AG04450 (cell line): ENCODE measurements at regions of chr10 and their contacts with region 1.

Region 1: GRCh38 chr10:61047081-61047480 is 103.1 kb upstream of the RHOBTB1 start:
- DNase-seq: no peak
- H3K4me3 ChIP-seq: no peak overlapping the region
- H3K27ac ChIP-seq: no peak overlapping the region
- H3K27me3 ChIP-seq: peaks cover 2% of the 10 kb centered on the region
- CTCF ChIP-seq: no peak

Region 2: DNA sequence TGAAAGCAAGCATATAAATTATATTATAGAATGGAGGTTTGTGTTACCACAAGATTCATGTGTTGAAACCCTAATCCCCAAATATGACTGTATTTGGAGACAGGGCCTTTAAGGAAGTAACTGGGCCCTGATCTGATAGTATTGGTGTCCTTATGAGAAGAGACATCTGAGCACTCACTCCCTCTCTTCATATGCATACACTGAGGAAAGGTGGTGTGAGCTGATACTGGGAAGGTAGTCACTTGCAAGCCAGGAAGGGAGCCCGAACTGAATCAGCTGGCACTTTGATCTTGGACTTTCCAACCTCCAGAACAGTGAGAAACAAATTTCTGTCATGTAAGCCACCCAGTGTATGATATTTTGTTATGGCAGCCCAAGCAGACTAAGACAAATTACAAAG is 36.2 kb before region 1 on chr10:
- CTCF ChIA-PET with region 1: no interaction called
- POLR2A ChIA-PET with region 1: no interaction called
- DNase-seq: no peak
- H3K4me3 ChIP-seq: no peak overlapping the region
- H3K27ac ChIP-seq: no peak overlapping the region
- H3K27me3 ChIP-seq: peaks cover 7% of the 10 kb centered on the region
- CTCF ChIP-seq: no peak

Region 3: DNA sequence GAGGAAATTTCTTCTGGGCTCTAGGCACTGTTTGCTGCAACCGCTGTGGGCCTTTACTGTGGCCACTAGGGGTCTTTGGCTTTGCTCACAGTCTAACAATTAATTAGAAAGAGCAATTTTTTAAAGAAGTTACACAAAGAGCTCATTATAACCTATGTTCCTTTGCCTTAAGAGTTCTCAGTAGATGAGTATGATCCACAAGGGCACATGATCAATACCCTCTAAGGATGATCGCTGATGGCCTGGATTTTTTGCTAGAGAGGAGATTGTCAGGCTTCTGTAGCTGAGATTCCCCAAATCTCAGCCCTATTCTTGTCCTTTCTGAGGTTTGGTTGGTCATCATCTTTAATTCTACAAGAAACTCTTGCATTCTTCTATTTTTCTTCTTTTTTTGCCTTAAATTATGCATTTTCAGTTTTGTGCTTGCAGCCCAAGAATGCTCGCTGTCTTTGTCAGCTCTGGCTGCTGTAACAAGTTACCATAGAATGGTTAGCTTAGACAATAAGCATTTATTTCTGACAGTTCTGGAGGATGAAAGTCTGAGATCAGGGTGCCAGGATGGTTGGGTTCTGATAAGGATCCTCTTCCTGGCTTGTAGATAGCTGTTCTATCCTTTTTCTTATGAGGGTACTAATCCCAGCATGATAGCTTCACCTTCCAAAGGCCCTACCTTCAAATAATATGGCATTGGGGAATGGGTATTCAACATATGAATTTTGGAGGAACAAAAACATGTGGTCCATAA is 22.1 kb before region 1 on chr10:
- CTCF ChIA-PET with region 1: interaction called, 10 read pairs
- POLR2A ChIA-PET with region 1: no interaction called
- DNase-seq: no peak
- H3K4me3 ChIP-seq: no peak overlapping the region
- H3K27ac ChIP-seq: no peak overlapping the region
- H3K27me3 ChIP-seq: no peaks in the 10 kb centered on the region
- CTCF ChIP-seq: peak; percentile 86

Region 4: GRCh38 chr10:61682323-61682722 is 635.2 kb after region 1 on chr10:
- CTCF ChIA-PET with region 1: no interaction called
- POLR2A ChIA-PET with region 1: no interaction called
- DNase-seq: no peak
- H3K4me3 ChIP-seq: no peak overlapping the region
- H3K27ac ChIP-seq: no peak overlapping the region
- H3K27me3 ChIP-seq: no peaks in the 10 kb centered on the region
- CTCF ChIP-seq: no peak